Activated CD4-positive, alpha-beta memory T cell treated with anti-CD3 and anti-CD28 coated beads for 36 hours (primary cell): ENCODE measurements at regions of chr19 and their contacts with region 1.

Region 1: DNA sequence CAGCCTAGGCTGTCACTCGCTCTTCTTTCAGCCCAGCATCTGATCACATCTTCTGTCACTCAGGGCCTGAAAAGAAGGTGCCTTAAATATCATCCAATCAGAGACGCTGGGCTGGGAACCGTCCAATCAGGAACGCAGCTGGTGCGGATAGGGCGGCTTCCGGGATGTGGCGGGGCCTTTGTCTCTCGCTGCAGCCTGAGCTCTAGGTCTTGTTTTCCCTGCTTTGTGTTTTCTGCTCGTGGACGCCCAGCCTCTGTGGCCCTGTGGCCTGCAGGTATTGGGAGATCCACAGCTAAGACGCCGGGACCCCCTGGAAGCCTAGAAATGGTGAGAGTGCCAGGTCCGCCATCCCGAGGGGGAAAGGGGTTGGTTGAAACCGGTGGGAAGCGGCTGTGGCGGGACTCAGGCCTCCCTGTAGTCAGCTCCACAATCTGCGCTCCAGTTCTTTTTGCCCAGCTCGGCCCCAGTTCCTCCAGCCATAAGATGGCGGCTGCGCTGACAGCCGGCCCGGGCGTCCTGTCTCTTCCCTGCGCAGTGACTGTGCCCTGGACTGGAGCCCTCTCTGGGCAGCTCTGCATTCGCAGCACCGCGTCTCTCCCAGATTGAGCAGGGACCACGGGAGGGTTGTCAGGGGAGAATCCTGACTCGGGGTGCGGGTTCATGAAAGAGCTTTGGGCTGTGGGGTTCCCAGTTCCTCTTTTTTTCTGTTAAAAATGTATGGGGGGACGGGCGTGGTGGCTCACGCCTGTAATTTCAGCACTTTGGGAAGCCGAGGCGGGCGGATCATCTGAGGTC is at the start of gene ZNF85:
- DNase-seq: peak; percentile 95
- H3K4me3 Mint-ChIP-seq: peak within 1 kb of the TSS; percentile 98
- H3K27ac Mint-ChIP-seq: peak within 1 kb of the TSS; percentile 94
- H3K4me1 Mint-ChIP-seq: peaks cover 23% of the 10 kb centered on the region
- H3K27me3 Mint-ChIP-seq: no peaks in the 10 kb centered on the region
- total RNA-seq, gene ZNF85: 15.4 to 18.5 TPM

Region 2: DNA sequence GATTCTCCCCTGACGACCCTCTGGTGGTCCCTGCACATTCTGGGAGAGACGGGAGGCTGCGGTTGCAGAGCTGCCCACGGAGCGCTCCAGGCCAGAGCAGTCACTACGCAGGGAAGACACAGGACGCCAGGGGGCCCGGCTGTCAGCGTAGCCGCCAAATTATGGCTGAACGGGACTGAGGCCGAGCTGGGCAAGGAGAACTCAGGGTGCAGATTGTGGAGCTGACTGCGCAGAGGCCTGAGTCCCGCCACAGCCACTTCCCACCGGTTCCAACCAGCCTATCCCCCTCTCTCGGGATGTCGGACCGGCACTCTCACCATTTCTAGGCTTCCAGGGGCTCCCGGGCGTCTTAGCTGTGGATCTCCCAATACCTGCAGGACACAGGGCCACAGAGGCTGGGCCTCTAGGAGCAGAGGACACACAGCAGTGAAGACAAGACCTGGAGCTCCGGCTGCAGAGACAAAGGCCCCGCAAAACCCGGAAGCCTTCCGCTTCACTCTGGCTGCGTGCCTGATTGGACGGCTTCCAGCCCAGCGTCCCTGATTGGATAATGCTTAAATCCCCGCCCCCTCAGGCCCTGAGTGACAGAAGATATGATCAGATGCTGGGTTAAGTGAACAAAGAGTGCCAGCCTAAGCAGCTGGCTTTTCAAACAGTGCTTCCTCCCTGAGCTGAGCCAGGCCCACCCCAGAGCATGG is 357.8 kb before region 1 on chr19 and contains the start of gene ZNF737:
- CTCF ChIA-PET with region 1: no interaction called
- POLR2A ChIA-PET with region 1: no interaction called
- intact Hi-C with region 1: loop called (anchors 5 kb)
- DNase-seq: peak; percentile 95
- H3K4me3 Mint-ChIP-seq: peak within 1 kb of the TSS; percentile 94
- H3K27ac Mint-ChIP-seq: peak within 1 kb of the TSS; percentile 93
- H3K4me1 Mint-ChIP-seq: peaks cover 11% of the 10 kb centered on the region
- H3K27me3 Mint-ChIP-seq: no peaks in the 10 kb centered on the region
- total RNA-seq, gene ZNF737: 9.0 to 9.9 TPM

Region 3: GRCh38 chr19:20776083-20777076 is 146.9 kb before region 1 on chr19 and contains the start of gene ZNF66:
- CTCF ChIA-PET with region 1: no interaction called
- POLR2A ChIA-PET with region 1: interaction called, 12 read pairs
- intact Hi-C with region 1: loop called (anchors 1 kb)
- DNase-seq: peak; percentile 97
- H3K4me3 Mint-ChIP-seq: peak within 1 kb of the TSS; percentile 100
- H3K27ac Mint-ChIP-seq: peak within 1 kb of the TSS; percentile 97
- H3K4me1 Mint-ChIP-seq: peaks cover 16% of the 10 kb centered on the region
- H3K27me3 Mint-ChIP-seq: no peaks in the 10 kb centered on the region
- total RNA-seq, gene ZNF66: 5.0 to 6.0 TPM

Region 4: GRCh38 chr19:20999731-21000352 is 76.6 kb after region 1 on chr19:
- CTCF ChIA-PET with region 1: no interaction called
- POLR2A ChIA-PET with region 1: interaction called, 8 read pairs
- intact Hi-C with region 1: loop called (anchors 2 kb)
- DNase-seq: peak; percentile 95
- H3K4me3 Mint-ChIP-seq: peak overlapping the region; percentile 97
- H3K27ac Mint-ChIP-seq: peak overlapping the region; percentile 84
- H3K4me1 Mint-ChIP-seq: peaks cover 9% of the 10 kb centered on the region
- H3K27me3 Mint-ChIP-seq: no peaks in the 10 kb centered on the region

Region 5: GRCh38 chr19:21082011-21082975 is 159.0 kb after region 1 on chr19 and contains the start of gene ZNF714:
- CTCF ChIA-PET with region 1: no interaction called
- POLR2A ChIA-PET with region 1: no interaction called
- intact Hi-C with region 1: loop called (anchors 1 kb)
- DNase-seq: peak; percentile 91
- H3K4me3 Mint-ChIP-seq: peak within 1 kb of the TSS; percentile 100
- H3K27ac Mint-ChIP-seq: peak within 1 kb of the TSS; percentile 94
- H3K4me1 Mint-ChIP-seq: peaks cover 31% of the 10 kb centered on the region
- H3K27me3 Mint-ChIP-seq: no peaks in the 10 kb centered on the region
- total RNA-seq, gene ZNF714: 17.9 to 18.0 TPM

Region 6: GRCh38 chr19:21141787-21142464 is 218.7 kb after region 1 on chr19 and contains the start of gene ZNF431:
- CTCF ChIA-PET with region 1: no interaction called
- POLR2A ChIA-PET with region 1: interaction called, 4 read pairs
- intact Hi-C with region 1: loop called (anchors 5 kb)
- DNase-seq: peak; percentile 94
- H3K4me3 Mint-ChIP-seq: peak within 1 kb of the TSS; percentile 96
- H3K27ac Mint-ChIP-seq: peak within 1 kb of the TSS; percentile 90
- H3K4me1 Mint-ChIP-seq: peaks cover 41% of the 10 kb centered on the region
- H3K27me3 Mint-ChIP-seq: no peaks in the 10 kb centered on the region
- total RNA-seq, gene ZNF431: 16.9 to 17.1 TPM